OCI-LY7 (cell line): ENCODE measurements at regions of chrX and their contacts with region 1.

Region 1: GRCh38 chrX:7996414-7996813 is 69.2 kb upstream of the PNPLA4 start:
- DNase-seq: peak; percentile 34
- H3K4me3 ChIP-seq: no peak overlapping the region
- H3K27ac ChIP-seq: no peak overlapping the region
- H3K4me1 ChIP-seq: no peaks in the 10 kb centered on the region
- CTCF ChIP-seq: peak; percentile 73

Region 2: DNA sequence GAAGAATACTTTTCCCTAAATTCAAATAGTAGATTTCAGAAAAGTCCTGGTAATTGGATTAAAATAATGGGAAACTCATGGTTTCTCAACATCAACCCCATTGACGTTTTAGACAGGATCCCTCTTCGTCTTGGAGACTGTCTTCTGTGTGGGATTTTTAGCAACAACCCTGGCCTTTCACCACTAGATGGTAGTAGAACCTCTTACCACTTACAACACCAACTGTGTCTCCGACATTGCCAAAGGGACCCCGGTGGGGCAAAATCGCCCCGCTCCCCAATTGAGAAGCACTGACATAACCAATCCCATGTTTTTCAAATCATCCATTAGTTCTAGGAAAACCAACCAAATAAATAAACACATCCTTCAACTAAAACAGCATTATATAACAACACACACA is 752.4 kb after region 1 on chrX:
- CTCF ChIA-PET with region 1: no interaction called
- POLR2A ChIA-PET with region 1: no interaction called
- intact Hi-C with region 1: loop called (anchors 5 kb)
- DNase-seq: peak; percentile 6
- H3K4me3 ChIP-seq: no peak overlapping the region
- H3K27ac ChIP-seq: no peak overlapping the region
- H3K4me1 ChIP-seq: no peaks in the 10 kb centered on the region
- CTCF ChIP-seq: peak; percentile 68